Body of pancreas (tissue), 4 donors: ENCODE measurements at regions of chr2 and their contacts with region 1.

Region 1: GRCh38 chr2:1546023-1546591 is 132.8 kb downstream of the TPO start:
- DNase-seq: peak; percentile 36 to 59 (median 48)
- ATAC-seq: peak; percentile 47
- H3K4me3 ChIP-seq: no peak overlapping the region
- H3K27ac ChIP-seq: no peak overlapping the region
- H3K4me1 ChIP-seq: peaks cover 12% of the 10 kb centered on the region
- H3K27me3 ChIP-seq: no peaks in the 10 kb centered on the region
- CTCF ChIP-seq: peak; percentile 71 to 92 (median 89)
- POLR2A ChIP-seq: no peak

Region 2: DNA sequence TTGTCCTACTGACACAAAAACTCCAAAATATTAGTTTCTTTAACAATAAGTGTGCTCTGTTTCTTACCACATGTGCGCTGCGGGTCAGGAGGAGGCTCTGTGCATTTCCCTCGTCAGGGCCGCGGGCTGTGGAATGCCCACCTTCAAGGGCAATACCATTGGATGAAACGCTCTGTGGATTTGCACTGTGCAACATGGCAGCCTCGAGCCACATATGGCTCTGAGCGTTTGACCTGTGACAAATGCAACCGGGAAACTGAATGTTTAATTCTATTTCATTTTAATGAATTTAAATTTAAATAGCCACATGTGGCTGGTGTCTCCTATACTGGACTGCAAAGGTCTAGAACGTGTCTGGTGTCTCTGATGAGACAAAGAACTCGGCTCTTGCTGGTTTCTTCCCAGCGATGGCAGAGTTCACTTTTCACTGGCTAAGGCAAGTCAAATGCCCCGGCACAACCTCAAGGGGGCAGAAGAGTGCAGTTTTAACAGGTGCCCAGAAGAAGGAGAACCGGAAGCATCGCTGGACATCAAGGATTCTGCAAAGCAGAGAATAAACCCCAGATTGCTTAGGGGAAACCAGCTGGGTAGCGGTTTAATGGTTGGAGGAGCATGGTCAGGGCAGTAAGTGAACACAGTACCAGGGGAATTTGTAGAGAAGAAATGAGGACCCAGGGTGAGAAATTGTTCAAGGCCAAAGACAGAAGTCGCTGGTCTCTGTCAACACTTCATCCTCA is 831.9 kb before region 1 on chr2:
- intact Hi-C with region 1: loop called (anchors 10 kb)
- DNase-seq: peak; percentile 71 to 83 (median 74)
- ATAC-seq: peak; percentile 91
- H3K4me3 ChIP-seq: no peak overlapping the region
- H3K27ac ChIP-seq: no peak overlapping the region
- H3K4me1 ChIP-seq: no peaks in the 10 kb centered on the region
- H3K27me3 ChIP-seq: no peaks in the 10 kb centered on the region
- CTCF ChIP-seq: peak; percentile 55 to 80 (median 74)
- POLR2A ChIP-seq: no peak

Region 3: DNA sequence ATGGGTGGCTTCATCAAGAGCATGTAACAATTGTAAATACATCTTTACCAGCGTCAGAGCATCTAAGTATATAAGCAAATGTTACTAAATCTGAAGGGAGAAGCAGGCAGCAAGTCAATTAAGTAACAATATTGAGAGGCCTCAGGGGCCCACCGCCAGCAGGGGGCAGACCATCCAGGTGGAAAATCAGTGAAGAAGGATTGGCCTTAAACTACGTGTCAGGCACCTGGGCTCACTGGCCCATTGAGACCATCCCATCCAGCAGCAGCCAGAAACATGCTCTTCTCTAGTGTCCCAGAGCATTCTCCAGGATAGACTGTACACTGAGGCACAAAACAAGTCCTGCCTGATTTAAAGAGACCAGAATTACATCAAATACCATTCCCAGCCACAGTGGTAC is 691.6 kb before region 1 on chr2:
- intact Hi-C with region 1: loop called (anchors 5 kb)
- DNase-seq: peak; percentile 61 to 72 (median 65)
- ATAC-seq: no peak
- H3K4me3 ChIP-seq: no peak overlapping the region
- H3K27ac ChIP-seq: no peak overlapping the region
- H3K4me1 ChIP-seq: no peaks in the 10 kb centered on the region
- H3K27me3 ChIP-seq: no peaks in the 10 kb centered on the region
- CTCF ChIP-seq: peak; percentile 43 to 65 (median 58)
- POLR2A ChIP-seq: no peak

Region 4: DNA sequence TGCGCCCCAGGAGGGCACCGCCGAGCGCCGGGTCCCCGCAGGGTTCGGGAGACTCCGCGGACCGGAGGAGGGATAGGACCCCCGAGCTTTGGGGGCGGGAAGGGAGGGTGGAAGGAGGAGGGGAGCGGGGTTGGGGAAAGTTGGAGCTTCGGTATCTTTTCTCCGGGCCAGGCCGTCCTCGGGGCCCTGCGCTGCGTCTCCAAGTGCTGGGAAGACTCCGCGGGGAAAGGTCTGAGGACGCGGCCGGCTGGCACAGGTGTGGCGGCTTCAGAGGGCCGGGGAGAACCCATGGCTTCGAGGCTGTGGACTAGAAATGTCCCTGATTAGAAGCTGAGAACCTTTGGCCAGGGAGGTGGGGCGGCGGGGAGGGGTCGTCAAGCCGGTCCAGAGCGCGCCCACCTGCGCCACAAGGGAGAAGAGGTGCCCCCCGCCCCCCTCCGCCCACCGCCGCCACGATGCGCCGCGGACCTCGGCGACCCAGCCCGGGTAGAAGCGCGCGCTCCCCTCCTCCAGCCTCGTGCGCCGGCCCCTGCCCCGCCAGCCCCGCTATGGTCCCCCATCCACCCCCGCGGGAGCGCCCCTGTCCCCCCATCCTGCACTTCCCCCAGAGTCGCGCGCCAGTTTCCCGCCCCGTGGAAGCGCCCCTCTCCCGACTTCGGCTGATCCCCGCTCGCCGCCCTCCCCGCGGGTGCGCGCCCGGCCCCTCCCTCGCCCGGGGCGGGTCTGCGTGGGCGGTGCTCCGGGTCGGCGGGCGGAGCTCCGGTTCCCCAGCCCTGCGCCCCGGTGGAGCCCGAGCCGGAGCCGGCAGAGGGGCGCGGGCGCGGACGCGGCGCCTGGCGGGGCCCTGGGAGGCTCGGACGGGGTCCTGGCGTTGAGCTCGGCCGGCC is 595.8 kb before region 1 on chr2 and contains the start of gene SNTG2:
- intact Hi-C with region 1: loop called (anchors 10 kb)
- DNase-seq: peak; percentile 42 to 76 (median 60)
- ATAC-seq: peak; percentile 82
- H3K4me3 ChIP-seq: peak within 1 kb of the TSS; percentile 49 to 90
- H3K27ac ChIP-seq: peak within 1 kb of the TSS in 1 of 4 donors; percentile 59
- H3K4me1 ChIP-seq: peaks cover 23% of the 10 kb centered on the region
- H3K27me3 ChIP-seq: peaks cover 0 to 4% of the 10 kb centered on the region in 2 donors
- CTCF ChIP-seq: peak in 1 of 7 experiments; percentile 9
- POLR2A ChIP-seq: peak in 1 of 3 donors; percentile 30
- total RNA-seq, gene SNTG2: 11.9 to 18.7 TPM